ENCODE measurements at regions of chr22 and their contacts with region 1.

Region 1: DNA sequence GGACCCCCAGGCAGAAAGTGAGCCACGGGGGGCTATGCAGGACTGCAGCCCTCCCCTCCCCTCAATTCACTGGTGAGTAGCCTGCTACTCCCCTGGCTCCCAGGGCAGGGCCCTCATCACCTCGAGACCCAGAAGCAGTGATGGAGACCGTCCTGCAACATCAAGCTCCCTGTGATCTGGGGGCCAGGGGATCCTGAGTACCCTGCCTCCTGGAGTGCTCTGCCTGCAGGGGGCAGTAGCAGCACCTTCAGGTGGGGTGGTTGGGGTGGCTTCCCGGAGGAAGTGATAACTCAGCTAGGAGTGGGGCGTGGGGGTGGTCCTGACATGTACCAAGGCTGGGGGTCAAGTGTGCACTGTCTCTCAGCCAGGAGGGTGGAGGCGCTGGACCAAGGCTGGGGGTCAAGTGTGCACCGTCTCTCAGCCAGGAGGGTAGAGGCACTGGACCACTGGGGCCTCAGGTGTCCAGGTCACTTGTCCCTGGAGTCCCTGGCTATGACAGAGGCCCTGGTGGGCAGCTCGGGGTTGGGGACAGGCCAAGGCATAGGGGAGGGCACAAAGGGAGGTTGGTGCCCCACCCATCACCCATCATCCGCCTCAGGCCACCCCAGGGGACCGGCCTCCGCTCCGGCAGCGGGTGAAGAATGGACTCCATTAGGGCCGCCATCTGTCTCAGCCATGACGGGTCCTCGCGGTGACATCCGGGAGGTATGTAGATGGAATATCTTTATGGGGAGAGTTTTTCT is 9.4 kb downstream of the RTN4R start:
- DNase-seq: peak; percentile 66

Region 2: GRCh38 chr22:20247010-20247505 is 11.7 kb before region 1 on chr22:
- CTCF ChIA-PET with region 1: interaction called, 10 read pairs
- POLR2A ChIA-PET with region 1: interaction called, 3 read pairs
- DNase-seq: no peak

Region 3: DNA sequence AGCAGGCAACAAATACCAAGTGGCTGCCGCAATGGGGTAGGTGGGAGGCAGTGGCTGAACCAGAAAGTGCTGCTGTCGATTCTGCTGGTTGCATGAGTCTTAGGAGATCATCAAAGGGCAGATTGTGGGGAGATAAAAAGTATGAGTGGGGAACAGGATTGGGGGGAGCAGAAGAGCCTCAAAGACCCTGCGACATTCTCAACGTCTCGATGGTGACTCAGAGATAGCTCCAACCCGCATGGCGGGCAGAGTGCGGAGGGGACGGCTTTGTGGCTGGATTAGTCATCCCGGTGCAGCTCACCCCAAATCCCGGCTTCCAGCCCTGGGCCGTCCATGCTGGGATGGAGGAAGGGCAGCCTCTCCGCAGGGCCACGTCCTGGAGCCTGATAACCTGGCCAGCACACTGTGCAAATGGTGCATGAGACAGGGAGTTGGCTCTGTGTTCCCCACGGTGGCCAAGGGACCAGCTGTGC is 20.9 kb after region 1 on chr22:
- CTCF ChIA-PET with region 1: no interaction called
- POLR2A ChIA-PET with region 1: no interaction called
- DNase-seq: no peak

Measured in HEK293T (cell line).